ENCODE measurements at regions of chr15 and their contacts with region 1.

Region 1: GRCh38 chr15:98599909-98600691 is 48.2 kb upstream of the IGF1R start:
- DNase-seq: peak in 3 of 5 donors; percentile 24 to 38 (median 28)
- ATAC-seq: peak in 3 of 4 donors; percentile 47 to 78 (median 73)
- H3K4me3 ChIP-seq: peak overlapping the region in 10 of 12 donors; percentile 7 to 59 (median 46)
- H3K27ac ChIP-seq: peak overlapping the region in 3 of 12 donors; percentile 27 to 63 (median 37)
- H3K4me1 ChIP-seq: peaks cover 0 to 16% (median 0%) of the 10 kb centered on the region in 12 donors
- H3K27me3 ChIP-seq: peaks cover 0 to 38% (median 7%) of the 10 kb centered on the region in 9 donors
- CTCF ChIP-seq: no peak
- POLR2A ChIP-seq: no peak

Region 2: DNA sequence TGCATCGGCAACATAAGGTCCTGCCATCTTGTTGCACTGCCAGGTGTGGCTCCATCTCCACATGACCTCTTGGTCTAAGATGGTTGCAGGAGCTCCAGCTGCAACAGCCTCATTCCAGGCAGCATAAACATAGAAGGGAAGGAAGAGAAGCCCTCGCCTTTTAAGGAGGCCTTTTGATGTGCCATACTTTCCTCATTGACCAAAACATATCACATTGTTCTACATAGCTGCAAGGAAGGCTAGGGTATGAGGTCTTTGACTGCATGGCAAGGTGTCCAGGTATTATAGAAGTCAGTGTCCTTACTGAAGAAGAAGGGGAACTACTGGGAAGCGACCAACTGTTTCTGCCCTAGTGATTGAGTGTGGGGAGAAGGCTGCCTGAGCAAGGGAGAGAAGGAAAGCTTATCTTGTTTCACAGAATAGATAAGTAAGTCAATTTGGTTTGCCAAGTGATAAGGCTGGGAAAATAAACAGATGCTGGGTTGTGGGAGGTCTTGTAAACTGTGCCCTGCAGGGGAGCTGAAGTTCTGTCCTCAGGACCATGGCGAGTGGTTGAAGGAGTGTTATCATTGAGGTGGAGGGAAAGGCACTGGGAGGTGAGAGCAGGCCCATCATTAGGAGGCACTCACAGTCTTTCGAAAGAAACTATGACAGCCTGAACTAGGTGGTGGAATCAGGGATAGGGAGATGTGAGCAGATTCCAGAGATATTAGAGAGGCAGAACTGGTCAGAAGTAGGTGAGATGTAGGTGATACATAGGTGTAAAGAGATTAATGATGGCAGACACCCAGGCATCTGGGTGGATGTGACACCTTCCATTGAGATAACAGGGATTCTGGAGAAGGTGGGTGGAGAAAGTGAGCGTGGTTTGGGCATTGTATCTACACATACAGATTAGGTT is 45.6 kb before region 1 on chr15:
- intact Hi-C with region 1: loop called in 1 of 10 experiments (anchors 10 kb)
- DNase-seq: no peak
- ATAC-seq: no peak
- H3K4me3 ChIP-seq: no peak overlapping the region
- H3K27ac ChIP-seq: no peak overlapping the region
- H3K4me1 ChIP-seq: no peaks in the 10 kb centered on the region
- H3K27me3 ChIP-seq: peaks cover 0 to 31% (median 6%) of the 10 kb centered on the region in 9 donors
- CTCF ChIP-seq: no peak
- POLR2A ChIP-seq: no peak

Region 3: GRCh38 chr15:98658831-98659699 is 59.0 kb after region 1 on chr15:
- intact Hi-C with region 1: no loop called
- DNase-seq: peak in 1 of 5 donors; percentile 40
- ATAC-seq: peak; percentile 43 to 80 (median 72)
- H3K4me3 ChIP-seq: no peak overlapping the region
- H3K27ac ChIP-seq: peak overlapping the region in 1 of 12 donors; percentile 23
- H3K4me1 ChIP-seq: peaks cover 0 to 84% (median 46%) of the 10 kb centered on the region in 12 donors
- H3K27me3 ChIP-seq: no peaks in the 10 kb centered on the region
- CTCF ChIP-seq: peak; percentile 75 to 90 (median 82)
- POLR2A ChIP-seq: no peak

Measured in heart left ventricle (tissue), 16 donors.